Endothelial cell of umbilical vein (primary cell): ENCODE measurements at regions of chr13 and their contacts with region 1.

Region 1: DNA sequence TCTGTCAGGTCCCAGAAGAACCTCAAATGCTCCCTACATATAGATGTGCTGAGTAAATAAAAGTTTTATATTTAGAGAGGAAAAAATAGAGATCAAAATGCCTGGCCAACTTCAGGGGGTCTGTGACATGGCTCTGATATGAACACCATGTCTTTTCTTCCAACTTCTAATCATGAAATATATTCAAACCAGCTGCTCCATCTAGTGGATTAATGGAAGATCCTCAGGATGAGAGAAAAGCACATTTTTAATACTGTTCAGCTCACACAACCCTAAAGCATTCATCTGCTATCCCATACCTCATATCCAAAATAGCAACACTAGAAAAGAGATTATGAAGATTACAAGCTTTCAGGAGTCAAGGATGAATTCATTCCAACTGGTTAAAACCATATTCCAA is 56.0 kb upstream of the DOCK9 start:
- DNase-seq: peak; percentile 59
- H3K4me3 ChIP-seq: no peak overlapping the region
- H3K27ac ChIP-seq: no peak overlapping the region
- H3K4me1 ChIP-seq: peaks cover 8% of the 10 kb centered on the region
- H3K27me3 ChIP-seq: no peaks in the 10 kb centered on the region
- CTCF ChIP-seq: peak; percentile 29 to 38
- POLR2A ChIP-seq: no peak

Region 2: DNA sequence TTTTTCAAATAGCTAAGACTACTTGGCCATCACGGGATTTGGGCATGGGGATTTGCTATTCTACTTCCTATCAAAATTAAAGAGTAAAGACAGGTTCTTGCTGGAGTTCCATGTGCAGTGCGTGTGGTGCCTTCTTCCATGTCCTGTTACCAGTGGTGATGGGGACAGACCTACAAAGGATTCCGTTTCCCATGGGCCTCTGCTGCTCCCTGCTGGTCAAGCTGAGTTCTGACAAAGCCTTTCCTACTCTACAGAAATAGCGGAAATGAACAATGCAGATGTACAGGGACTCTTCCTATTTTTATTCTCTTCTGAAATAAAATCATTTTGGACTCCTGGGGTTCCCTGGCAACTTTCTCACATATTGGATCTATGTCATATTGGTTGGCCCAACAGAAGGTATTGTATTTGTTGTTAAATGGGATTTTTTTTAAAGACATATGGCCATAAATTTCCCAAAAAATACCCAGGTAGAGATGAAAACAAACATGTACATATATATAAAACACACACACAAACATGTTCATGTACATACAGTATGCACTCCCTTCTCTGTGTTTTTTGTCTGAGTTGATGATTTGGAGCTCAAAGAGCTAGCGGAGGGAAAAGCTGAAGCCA is 190.8 kb before region 1 on chr13:
- CTCF ChIA-PET with region 1: interaction called, 50 read pairs
- POLR2A ChIA-PET with region 1: no interaction called
- dilution Hi-C with region 1: no loop called
- intact Hi-C with region 1: loop called (anchors 1 kb)
- DNase-seq: peak; percentile 77
- H3K4me3 ChIP-seq: no peak overlapping the region
- H3K27ac ChIP-seq: no peak overlapping the region
- H3K4me1 ChIP-seq: peaks cover 6% of the 10 kb centered on the region
- H3K27me3 ChIP-seq: no peaks in the 10 kb centered on the region
- CTCF ChIP-seq: peak; percentile 79 to 85
- POLR2A ChIP-seq: no peak

Region 3: GRCh38 chr13:98879957-98880356 is 153.9 kb before region 1 on chr13:
- CTCF ChIA-PET with region 1: interaction called, 12 read pairs
- POLR2A ChIA-PET with region 1: no interaction called
- dilution Hi-C with region 1: no loop called
- intact Hi-C with region 1: no loop called
- DNase-seq: no peak
- H3K4me3 ChIP-seq: no peak overlapping the region
- H3K27ac ChIP-seq: no peak overlapping the region
- H3K4me1 ChIP-seq: peaks cover 16% of the 10 kb centered on the region
- H3K27me3 ChIP-seq: no peaks in the 10 kb centered on the region
- CTCF ChIP-seq: no peak
- POLR2A ChIP-seq: no peak

Region 4: GRCh38 chr13:98959786-98960605 is 73.8 kb before region 1 on chr13:
- CTCF ChIA-PET with region 1: interaction called, 11 read pairs
- POLR2A ChIA-PET with region 1: no interaction called
- dilution Hi-C with region 1: no loop called
- intact Hi-C with region 1: no loop called
- DNase-seq: peak; percentile 86
- H3K4me3 ChIP-seq: no peak overlapping the region
- H3K27ac ChIP-seq: peak overlapping the region; percentile 78
- H3K4me1 ChIP-seq: peaks cover 39% of the 10 kb centered on the region
- H3K27me3 ChIP-seq: no peaks in the 10 kb centered on the region
- CTCF ChIP-seq: no peak
- POLR2A ChIP-seq: no peak

Region 5: GRCh38 chr13:98977568-98978265 is 56.1 kb before region 1 on chr13 and contains the start of gene DOCK9:
- CTCF ChIA-PET with region 1: interaction called, 37 read pairs
- POLR2A ChIA-PET with region 1: interaction called, 3 read pairs
- dilution Hi-C with region 1: no loop called
- intact Hi-C with region 1: loop called (anchors 1 kb)
- DNase-seq: peak; percentile 89
- H3K4me3 ChIP-seq: peak within 1 kb of the TSS; percentile 47 to 100 (median 86)
- H3K27ac ChIP-seq: peak within 1 kb of the TSS; percentile 97
- H3K4me1 ChIP-seq: peaks cover 52% of the 10 kb centered on the region
- H3K27me3 ChIP-seq: no peaks in the 10 kb centered on the region
- CTCF ChIP-seq: no peak
- POLR2A ChIP-seq: peak; percentile 87
- total RNA-seq, gene DOCK9: 323 and 334 TPM in 2 replicates

Region 6: GRCh38 chr13:99093997-99094396 is 60.2 kb after region 1 on chr13:
- CTCF ChIA-PET with region 1: no interaction called
- POLR2A ChIA-PET with region 1: no interaction called
- dilution Hi-C with region 1: no loop called
- intact Hi-C with region 1: no loop called
- DNase-seq: no peak
- H3K4me3 ChIP-seq: no peak overlapping the region
- H3K27ac ChIP-seq: no peak overlapping the region
- H3K4me1 ChIP-seq: no peaks in the 10 kb centered on the region
- H3K27me3 ChIP-seq: peaks cover 0 to 2% of the 10 kb centered on the region in 2 experiments
- CTCF ChIP-seq: no peak
- POLR2A ChIP-seq: no peak

Region 7: DNA sequence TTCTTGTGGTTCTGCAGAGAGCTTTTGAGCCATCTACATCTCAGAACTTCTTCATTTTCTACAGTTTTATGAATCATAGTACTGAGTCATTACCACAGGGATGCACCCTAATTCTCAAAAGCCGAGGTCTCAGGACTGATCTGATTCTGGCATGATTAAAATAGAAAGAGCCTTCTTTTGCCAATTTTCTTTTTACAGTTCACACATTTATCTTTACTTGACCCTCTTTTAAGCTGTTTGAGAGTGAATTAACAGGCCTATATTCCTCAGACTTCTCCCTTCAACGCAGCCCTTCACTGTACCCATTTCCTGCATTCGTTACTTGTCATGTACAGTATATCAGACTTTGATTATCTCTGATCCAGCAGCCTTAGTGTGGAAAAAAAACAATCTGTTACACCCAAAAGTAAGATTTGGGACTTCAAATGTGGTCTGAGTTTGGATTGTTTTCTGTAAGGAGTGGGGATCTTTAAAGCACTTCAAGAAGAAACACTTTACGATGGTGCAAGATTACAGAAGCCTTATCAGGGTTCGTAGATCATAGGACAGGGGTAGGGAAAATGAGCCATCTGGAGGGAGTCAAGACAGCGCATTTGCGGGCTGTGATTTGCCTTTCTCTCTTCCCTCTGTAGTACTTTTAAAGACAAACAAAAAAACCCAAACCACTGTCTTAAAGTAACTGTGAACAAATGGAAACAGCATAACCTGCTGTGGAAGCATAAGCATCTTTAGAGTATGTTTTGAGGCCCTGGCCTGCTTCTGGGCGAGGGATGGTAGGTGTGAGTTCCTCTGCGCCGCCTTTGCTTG is 288.7 kb after region 1 on chr13:
- CTCF ChIA-PET with region 1: no interaction called
- POLR2A ChIA-PET with region 1: no interaction called
- dilution Hi-C with region 1: no loop called
- intact Hi-C with region 1: no loop called
- DNase-seq: peak; percentile 24
- H3K4me3 ChIP-seq: no peak overlapping the region
- H3K27ac ChIP-seq: no peak overlapping the region
- H3K4me1 ChIP-seq: peaks cover 15% of the 10 kb centered on the region
- H3K27me3 ChIP-seq: no peaks in the 10 kb centered on the region
- CTCF ChIP-seq: no peak
- POLR2A ChIP-seq: no peak